Dorsolateral prefrontal cortex (tissue), 120 donors: ENCODE measurements at regions of chr9 and their contacts with region 1.

Region 1: GRCh38 chr9:129413537-129414376 is 207.1 kb downstream of the C9orf50 start:
- DNase-seq: peak; percentile 97 to 99 (median 98)
- H3K4me3 ChIP-seq: peak overlapping the region; percentile 47 to 89 (median 71)
- H3K27ac ChIP-seq: peak overlapping the region; percentile 91 to 100 (median 99)
- H3K27me3 ChIP-seq: no peaks in the 10 kb centered on the region
- CTCF ChIP-seq: peak in 13 of 56 donors; percentile 8 to 50 (median 21)

Region 2: DNA sequence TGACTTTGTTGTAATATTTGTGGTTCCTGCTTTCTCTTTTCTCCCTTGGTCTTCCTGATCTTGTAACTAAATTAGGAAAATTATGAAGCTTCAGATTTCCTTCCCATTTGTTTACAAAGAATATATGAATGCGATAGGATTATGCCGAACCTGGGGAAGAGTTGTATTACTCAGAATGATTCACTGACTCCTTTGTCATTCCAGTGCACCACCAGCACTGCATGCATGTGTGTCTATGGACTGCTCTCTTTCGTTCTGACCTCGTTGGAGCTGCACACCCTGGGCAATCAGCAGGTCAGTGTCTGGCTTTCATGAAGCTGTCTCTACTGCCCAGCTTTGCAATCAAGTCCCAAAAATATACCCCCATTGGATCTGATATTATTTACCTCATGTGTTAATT is 440.8 kb before region 1 on chr9:
- intact Hi-C with region 1: no loop called
- DNase-seq: no peak
- H3K4me3 ChIP-seq: no peak overlapping the region
- H3K27ac ChIP-seq: no peak overlapping the region
- H3K27me3 ChIP-seq: no peaks in the 10 kb centered on the region
- CTCF ChIP-seq: no peak

Region 3: DNA sequence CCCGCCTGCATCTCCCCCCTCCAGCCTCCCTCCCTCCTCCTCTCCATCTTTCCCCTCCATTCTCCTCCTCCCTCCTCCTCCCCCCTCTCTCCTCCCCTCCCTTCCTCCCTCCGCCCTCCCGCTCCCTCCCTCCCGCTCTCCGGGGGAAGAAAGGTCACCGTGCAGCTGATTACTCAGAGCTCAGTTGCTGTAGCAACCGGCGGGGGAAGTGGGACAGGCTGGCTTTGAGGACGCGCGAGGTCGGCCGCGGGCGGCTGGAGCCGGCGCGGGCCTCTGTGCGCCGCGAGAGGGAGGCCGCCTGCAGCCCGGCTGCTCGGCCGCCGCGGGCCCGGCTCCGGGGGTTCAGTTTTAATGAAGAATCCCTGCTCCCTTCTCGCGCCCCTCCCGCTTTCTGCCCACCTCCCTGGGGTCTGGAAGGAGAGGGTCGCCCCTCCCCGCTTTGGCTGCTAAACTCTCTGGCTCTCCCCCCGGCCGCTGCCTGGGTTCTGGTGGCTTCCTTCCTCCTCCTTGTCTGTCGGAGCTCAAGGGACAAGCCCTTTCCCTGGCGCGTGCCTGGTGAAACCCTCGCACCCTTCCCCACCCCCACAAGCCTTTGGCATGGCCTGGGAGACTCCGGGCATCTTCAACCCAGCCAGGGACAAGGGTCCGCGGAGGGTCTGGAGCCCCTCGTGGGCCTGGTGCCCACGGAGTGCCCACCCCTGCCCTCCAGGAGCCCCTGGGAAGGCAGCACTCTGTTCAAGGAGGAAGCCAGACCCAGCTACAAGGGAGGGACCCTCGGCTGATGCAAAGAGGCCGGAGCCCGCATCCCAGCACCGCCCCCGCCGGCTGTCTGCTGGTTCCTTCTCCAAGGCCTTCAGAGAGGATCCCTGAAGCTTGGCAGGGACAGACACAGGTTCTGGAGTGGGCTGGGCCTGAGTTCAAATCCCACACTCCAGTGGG is 46.8 kb after region 1 on chr9:
- intact Hi-C with region 1: loop called (anchors 1 to 2 kb)
- DNase-seq: peak; percentile 90 to 98 (median 96)
- H3K4me3 ChIP-seq: peak overlapping the region; percentile 30 to 71 (median 55)
- H3K27ac ChIP-seq: peak overlapping the region; percentile 74 to 100 (median 99)
- H3K27me3 ChIP-seq: no peaks in the 10 kb centered on the region
- CTCF ChIP-seq: peak in 23 of 56 donors; percentile 8 to 58 (median 31)

Region 4: DNA sequence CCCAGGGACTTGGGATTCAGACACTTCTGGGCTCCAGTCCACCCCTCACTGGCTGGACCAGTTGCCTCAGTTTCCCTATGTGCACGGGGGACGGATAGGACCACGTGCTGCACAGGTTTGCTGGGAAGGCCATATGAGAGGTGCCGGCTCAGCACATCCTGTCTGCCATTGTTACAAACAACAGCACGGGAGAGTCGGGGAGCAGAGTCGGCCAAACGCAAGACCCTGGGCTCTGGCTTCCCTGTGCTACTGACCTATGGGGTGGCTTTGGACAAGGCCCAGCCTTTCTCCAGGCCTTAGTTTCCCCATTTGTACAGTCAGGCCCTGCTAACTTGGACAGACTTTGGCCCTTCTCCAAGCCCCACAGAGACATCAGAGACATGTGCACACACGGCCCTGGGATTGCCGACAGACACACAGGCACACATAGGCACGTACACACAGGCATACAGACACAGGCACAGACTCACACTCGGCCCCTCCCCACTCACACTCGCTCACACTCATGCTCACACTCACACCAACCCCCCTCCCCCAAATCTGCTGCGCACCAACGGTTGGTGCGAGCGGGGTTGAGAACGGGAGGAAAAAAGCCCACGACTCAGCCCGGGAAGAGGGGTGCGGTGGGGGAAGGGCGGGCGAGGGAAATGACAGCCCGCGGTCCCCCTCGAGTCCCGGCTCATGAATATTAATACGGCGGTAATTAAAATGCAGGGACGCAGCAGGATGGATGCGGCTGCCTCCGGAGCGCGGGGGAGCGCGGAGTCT is 74.1 kb after region 1 on chr9:
- intact Hi-C with region 1: loop called in 1 of 2 experiments (anchors 2 kb)
- DNase-seq: peak in 5 of 10 donors; percentile 40 to 65 (median 58)
- H3K4me3 ChIP-seq: peak overlapping the region; percentile 34 to 74 (median 60)
- H3K27ac ChIP-seq: peak overlapping the region; percentile 81 to 100 (median 99)
- H3K27me3 ChIP-seq: no peaks in the 10 kb centered on the region
- CTCF ChIP-seq: no peak